CD4-positive, alpha-beta T cell (primary cell): ENCODE measurements at regions of chr1 and their contacts with region 1.

Region 1: GRCh38 chr1:42681741-42682483 is at the start of gene YBX1:
- DNase-seq: peak; percentile 89 to 99 (median 93)
- ATAC-seq: peak; percentile 90
- H3K4me3 ChIP-seq: peak within 1 kb of the TSS; percentile 80
- H3K4me3 Mint-ChIP-seq: peak within 1 kb of the TSS; percentile 100
- H3K27ac ChIP-seq: peak within 1 kb of the TSS; percentile 83 to 87
- H3K27ac Mint-ChIP-seq: peak within 1 kb of the TSS; percentile 94
- H3K4me1 ChIP-seq: peaks cover 36% of the 10 kb centered on the region
- H3K4me1 Mint-ChIP-seq: peaks cover 50% of the 10 kb centered on the region
- H3K27me3 ChIP-seq: no peaks in the 10 kb centered on the region
- H3K27me3 Mint-ChIP-seq: no peaks in the 10 kb centered on the region
- CTCF ChIP-seq: no peak
- total RNA-seq, gene YBX1: 372 to 389 TPM

Region 2: DNA sequence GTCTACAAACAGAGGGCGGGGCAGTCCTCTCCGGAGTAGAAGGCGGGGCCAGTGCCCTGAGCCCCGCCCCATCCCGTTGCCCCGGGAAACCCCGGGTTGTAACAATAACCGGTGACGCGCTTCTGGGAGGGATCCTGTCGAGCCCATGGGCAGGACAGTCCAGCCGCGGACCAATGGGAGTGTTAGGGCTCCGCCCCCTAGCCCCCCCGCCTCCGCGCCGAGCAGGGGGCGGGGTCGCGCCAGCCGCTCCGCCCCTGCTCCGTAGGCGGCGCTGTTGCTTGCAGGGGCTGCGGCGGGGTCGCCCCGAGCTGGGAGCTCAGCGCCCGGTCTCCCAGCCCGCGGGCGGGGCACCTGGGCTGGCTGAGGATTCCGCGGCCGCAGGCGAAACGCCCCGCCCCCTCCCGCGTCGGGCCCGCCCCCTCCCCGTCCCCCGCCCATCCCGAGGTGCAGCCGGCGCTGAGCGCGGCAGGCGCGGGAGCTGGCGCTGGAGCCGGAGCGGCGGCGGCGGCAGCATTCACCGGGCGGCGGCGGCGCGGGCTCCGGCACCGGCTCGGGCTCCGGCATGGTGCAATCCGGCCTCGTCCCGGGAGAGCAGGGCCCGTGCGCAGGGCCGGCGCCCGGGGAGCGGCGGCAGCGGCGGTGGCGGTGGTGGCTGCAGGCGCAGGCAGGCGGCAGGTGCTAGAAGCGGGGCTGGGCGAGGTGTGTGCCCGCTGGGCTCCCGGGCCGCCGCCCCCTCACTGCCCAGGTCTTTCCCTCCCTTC is 1320.7 kb before region 1 on chr1 and contains the start of gene FOXO6:
- CTCF ChIA-PET with region 1: no interaction called
- POLR2A ChIA-PET with region 1: no interaction called
- intact Hi-C with region 1: loop called in 1 of 2 experiments (anchors 10 kb)
- DNase-seq: peak; percentile 86 to 97 (median 93)
- ATAC-seq: peak; percentile 86
- H3K4me3 ChIP-seq: peak within 1 kb of the TSS; percentile 42
- H3K4me3 Mint-ChIP-seq: peak within 1 kb of the TSS; percentile 89
- H3K27ac ChIP-seq: no peak within 1 kb of the TSS
- H3K27ac Mint-ChIP-seq: peak within 1 kb of the TSS; percentile 77
- H3K4me1 ChIP-seq: peaks cover 34% of the 10 kb centered on the region
- H3K4me1 Mint-ChIP-seq: peaks cover 19% of the 10 kb centered on the region
- H3K27me3 ChIP-seq: peaks cover 19 to 25% of the 10 kb centered on the region in 2 experiments
- H3K27me3 Mint-ChIP-seq: peaks cover 30% of the 10 kb centered on the region
- CTCF ChIP-seq: peak; percentile 18
- total RNA-seq, gene FOXO6: 1.2 to 2.2 TPM

Region 3: DNA sequence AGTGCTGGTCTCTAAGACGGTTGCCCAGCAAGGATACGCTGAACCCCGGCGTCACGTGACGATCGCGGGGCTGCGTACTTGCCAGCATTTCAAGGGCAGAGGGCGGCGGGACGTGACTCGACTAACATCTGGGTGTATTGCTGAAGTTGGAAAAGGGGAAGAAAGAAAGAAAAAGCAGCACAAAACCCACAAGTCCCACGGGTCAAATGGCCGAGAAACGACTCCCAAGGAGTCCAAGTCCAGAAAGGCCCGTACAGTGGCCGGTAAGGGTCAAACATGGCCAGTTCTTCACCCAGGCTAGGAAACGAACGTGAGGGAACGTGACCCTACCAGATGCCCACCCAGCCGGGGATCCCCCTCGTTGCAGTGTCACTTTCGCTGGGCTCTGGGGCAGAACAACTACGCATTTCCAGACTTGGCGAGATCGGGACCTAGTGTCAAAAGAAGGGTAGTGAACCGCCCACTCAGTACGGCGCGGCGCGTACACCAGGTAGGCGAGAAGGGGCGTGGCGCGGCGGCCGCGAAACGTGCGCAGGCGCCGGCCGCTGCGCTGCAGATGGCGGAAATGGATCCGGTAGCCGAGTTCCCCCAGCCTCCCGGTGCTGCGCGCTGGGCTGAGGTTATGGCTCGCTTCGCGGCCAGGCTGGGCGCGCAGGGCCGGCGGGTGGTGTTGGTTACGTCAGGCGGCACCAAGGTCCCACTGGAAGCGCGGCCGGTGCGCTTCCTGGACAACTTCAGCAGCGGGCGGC is 225.7 kb before region 1 on chr1 and contains the starts of genes PPCS and ZMYND12:
- CTCF ChIA-PET with region 1: no interaction called
- POLR2A ChIA-PET with region 1: interaction called, 19 read pairs
- intact Hi-C with region 1: loop called (anchors 1 to 5 kb)
- DNase-seq: peak; percentile 84 to 97 (median 89)
- ATAC-seq: peak; percentile 90
- H3K4me3 ChIP-seq: peak within 1 kb of the TSS; percentile 70
- H3K4me3 Mint-ChIP-seq: peak within 1 kb of the TSS; percentile 95
- H3K27ac ChIP-seq: peak within 1 kb of the TSS; percentile 98 to 99
- H3K27ac Mint-ChIP-seq: peak within 1 kb of the TSS; percentile 96
- H3K4me1 ChIP-seq: peaks cover 24% of the 10 kb centered on the region
- H3K4me1 Mint-ChIP-seq: peaks cover 56% of the 10 kb centered on the region
- H3K27me3 ChIP-seq: no peaks in the 10 kb centered on the region
- H3K27me3 Mint-ChIP-seq: no peaks in the 10 kb centered on the region
- CTCF ChIP-seq: peak; percentile 28
- total RNA-seq, gene PPCS: 39.7 to 40.4 TPM
- total RNA-seq, gene ZMYND12: 0.58 to 0.70 TPM

Region 4: DNA sequence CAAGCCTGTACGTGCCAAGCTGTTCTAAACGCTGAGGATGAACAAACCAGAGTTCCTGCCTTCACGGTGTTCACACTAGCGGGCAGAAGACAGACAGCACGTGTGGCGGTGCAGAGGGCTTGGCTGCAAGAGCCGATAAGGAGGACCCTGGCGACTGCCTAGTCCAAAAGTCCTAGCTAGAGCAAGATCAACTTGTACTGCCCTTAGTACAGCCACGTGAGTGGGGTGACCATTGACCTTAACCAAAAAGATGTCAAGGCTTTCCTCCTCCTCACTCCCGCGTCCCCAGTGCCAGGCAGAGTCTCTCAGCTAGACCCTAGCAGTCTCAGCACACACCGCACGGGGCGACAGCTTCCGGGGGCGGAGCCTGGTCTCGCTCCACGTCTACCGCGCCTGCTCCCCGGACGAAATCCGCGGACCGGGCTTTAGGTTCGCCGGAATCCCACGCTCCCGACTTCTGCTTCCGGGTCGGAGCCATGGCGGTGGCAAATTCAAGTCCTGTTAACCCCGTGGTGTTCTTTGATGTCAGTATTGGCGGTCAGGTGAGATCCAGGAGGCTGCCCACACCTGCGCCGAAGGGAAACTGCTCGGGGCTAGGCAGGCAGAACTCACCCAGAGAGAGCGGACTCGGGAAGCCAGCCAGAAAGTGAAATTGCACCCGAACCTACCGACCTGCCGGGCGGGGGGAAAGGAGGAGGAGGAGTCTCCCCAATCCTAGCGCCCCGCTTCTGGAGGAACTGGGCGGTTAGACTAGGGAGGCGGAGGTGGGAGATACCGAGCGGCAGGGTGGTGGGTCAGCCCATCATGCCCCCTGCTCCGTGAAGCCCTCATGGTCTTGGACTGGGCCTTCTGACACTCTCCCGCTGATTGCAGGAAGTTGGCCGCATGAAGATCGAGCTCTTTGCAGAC is 23.7 kb before region 1 on chr1 and contains the start of gene PPIH:
- CTCF ChIA-PET with region 1: interaction called, 21 read pairs
- POLR2A ChIA-PET with region 1: interaction called, 171 read pairs
- intact Hi-C with region 1: loop called (anchors 1 kb)
- DNase-seq: peak; percentile 87 to 97 (median 94)
- ATAC-seq: peak; percentile 98
- H3K4me3 ChIP-seq: peak within 1 kb of the TSS; percentile 94
- H3K4me3 Mint-ChIP-seq: peak within 1 kb of the TSS; percentile 95
- H3K27ac ChIP-seq: peak within 1 kb of the TSS; percentile 68 to 77
- H3K27ac Mint-ChIP-seq: peak within 1 kb of the TSS; percentile 88
- H3K4me1 ChIP-seq: peaks cover 18% of the 10 kb centered on the region
- H3K4me1 Mint-ChIP-seq: peaks cover 50% of the 10 kb centered on the region
- H3K27me3 ChIP-seq: no peaks in the 10 kb centered on the region
- H3K27me3 Mint-ChIP-seq: no peaks in the 10 kb centered on the region
- CTCF ChIP-seq: no peak
- total RNA-seq, gene PPIH: 29.4 to 32.6 TPM

Region 5: GRCh38 chr1:42720868-42721267 is 39.0 kb after region 1 on chr1:
- CTCF ChIA-PET with region 1: no interaction called
- POLR2A ChIA-PET with region 1: no interaction called
- intact Hi-C with region 1: no loop called
- DNase-seq: no peak
- ATAC-seq: no peak
- H3K4me3 ChIP-seq: no peak overlapping the region
- H3K4me3 Mint-ChIP-seq: no peak overlapping the region
- H3K27ac ChIP-seq: no peak overlapping the region
- H3K27ac Mint-ChIP-seq: no peak overlapping the region
- H3K4me1 ChIP-seq: no peaks in the 10 kb centered on the region
- H3K4me1 Mint-ChIP-seq: no peaks in the 10 kb centered on the region
- H3K27me3 ChIP-seq: no peaks in the 10 kb centered on the region
- H3K27me3 Mint-ChIP-seq: no peaks in the 10 kb centered on the region
- CTCF ChIP-seq: no peak

Region 6: GRCh38 chr1:42846257-42847110 is 164.6 kb after region 1 on chr1 and contains the start of gene ZNF691:
- CTCF ChIA-PET with region 1: no interaction called
- POLR2A ChIA-PET with region 1: interaction called, 20 read pairs
- intact Hi-C with region 1: loop called in 1 of 2 experiments (anchors 1 kb)
- DNase-seq: peak; percentile 73 to 96 (median 82)
- ATAC-seq: peak; percentile 98
- H3K4me3 ChIP-seq: peak within 1 kb of the TSS; percentile 96
- H3K4me3 Mint-ChIP-seq: peak within 1 kb of the TSS; percentile 94
- H3K27ac ChIP-seq: peak within 1 kb of the TSS in 1 of 2 donors; percentile 56
- H3K27ac Mint-ChIP-seq: peak within 1 kb of the TSS; percentile 67
- H3K4me1 ChIP-seq: peaks cover 19% of the 10 kb centered on the region
- H3K4me1 Mint-ChIP-seq: peaks cover 38% of the 10 kb centered on the region
- H3K27me3 ChIP-seq: no peaks in the 10 kb centered on the region
- H3K27me3 Mint-ChIP-seq: no peaks in the 10 kb centered on the region
- CTCF ChIP-seq: peak; percentile 47
- total RNA-seq, gene ZNF691: 1.2 to 1.7 TPM

Region 7: DNA sequence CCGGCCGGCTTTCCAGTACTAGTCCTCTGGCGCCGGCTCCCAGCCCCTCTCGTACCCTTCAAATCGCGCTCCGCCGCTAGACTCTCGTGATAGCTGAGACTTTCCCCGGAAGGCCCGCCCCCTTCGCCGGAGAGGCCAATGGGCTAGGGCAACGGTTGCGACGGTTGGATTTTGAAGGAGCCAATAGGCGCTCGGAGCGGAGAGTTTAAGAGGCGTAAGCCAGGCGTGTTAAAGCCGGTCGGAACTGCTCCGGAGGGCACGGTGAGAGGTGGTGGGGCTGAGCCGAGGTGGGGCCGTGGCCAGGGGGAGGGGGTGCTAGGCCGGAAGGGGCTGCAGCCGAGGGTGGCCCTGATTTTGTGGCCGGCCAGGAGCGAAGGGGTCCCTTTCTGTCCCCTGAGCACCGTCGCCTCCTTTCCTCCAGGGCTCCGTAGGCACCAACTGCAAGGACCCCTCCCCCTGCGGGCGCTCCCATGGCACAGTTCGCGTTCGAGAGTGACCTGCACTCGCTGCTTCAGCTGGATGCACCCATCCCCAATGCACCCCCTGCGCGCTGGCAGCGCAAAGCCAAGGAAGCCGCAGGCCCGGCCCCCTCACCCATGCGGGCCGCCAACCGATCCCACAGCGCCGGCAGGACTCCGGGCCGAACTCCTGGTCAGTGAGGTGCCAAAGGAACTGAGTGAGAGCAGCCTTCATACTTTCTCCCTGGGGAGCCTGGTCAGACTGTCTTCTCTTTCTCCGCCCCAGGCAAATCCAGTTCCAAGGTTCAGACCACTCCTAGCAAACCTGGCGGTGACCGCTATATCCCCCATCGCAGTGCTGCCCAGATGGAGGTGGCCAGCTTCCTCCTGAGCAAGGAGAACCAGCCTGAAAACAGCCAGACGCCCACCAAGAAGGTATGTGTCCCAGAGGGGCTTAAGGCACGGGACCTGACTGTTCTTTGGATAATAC is 677.1 kb after region 1 on chr1 and contains the start of gene CDC20:
- CTCF ChIA-PET with region 1: no interaction called
- POLR2A ChIA-PET with region 1: no interaction called
- intact Hi-C with region 1: loop called in 1 of 2 experiments (anchors 5 kb)
- DNase-seq: peak; percentile 91 to 98 (median 96)
- ATAC-seq: peak; percentile 99
- H3K4me3 ChIP-seq: peak within 1 kb of the TSS; percentile 76
- H3K4me3 Mint-ChIP-seq: peak within 1 kb of the TSS; percentile 85
- H3K27ac ChIP-seq: peak within 1 kb of the TSS in 1 of 2 donors; percentile 37
- H3K27ac Mint-ChIP-seq: peak within 1 kb of the TSS; percentile 87
- H3K4me1 ChIP-seq: peaks cover 15% of the 10 kb centered on the region
- H3K4me1 Mint-ChIP-seq: peaks cover 19% of the 10 kb centered on the region
- H3K27me3 ChIP-seq: no peaks in the 10 kb centered on the region
- H3K27me3 Mint-ChIP-seq: no peaks in the 10 kb centered on the region
- CTCF ChIP-seq: no peak
- total RNA-seq, gene CDC20: 1.1 to 1.8 TPM